BJ (cell line): ENCODE measurements at regions of chr4 and their contacts with region 1.

Region 1: GRCh38 chr4:78355306-78355705 is 196.3 kb upstream of the ANXA3 start:
- DNase-seq: no peak
- H3K4me3 ChIP-seq: no peak overlapping the region
- H3K27me3 ChIP-seq: no peaks in the 10 kb centered on the region
- CTCF ChIP-seq: no peak

Region 2: DNA sequence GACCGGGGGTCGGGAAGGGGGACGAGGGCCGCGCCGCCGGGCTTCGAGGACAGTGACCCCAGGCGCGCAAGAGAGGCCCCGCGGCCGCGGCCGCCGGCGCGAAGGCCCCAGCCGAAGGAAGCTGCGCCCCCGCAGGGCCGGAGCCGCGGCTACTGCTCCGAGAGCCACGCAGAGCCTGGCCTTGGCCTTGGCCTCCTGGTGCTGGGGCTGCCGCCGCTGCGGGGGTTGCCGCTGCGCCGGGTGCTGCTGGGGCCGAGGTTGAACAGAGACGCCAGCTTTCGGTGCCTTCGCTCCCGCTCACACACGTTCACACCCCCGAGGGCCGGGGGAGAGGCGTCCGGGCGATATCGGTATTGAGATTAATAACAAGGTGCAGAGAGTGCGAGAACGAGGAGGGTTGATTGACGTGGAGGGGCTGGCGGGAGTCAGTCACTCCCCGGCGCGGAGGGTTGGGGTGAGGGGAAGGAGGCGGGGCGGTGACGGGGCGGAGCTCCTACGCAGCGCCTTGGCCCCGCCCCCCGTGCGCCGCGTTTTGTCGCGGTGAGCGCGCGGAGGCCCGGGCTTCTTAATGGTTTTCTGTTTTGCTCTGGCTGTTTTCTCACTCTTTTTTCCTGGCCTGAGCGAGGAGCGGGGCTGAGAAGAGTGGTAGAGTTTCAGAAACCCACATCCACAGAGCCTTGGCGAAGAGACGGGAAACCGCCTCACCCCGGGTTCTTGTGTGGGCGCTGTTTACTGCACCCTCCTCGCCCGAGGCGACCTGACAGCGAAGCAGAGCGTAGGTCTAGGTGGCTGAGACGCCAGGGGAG is 535.3 kb before region 1 on chr4:
- CTCF ChIA-PET with region 1: no interaction called
- POLR2A ChIA-PET with region 1: no interaction called
- DNase-seq: no peak
- H3K4me3 ChIP-seq: peak overlapping the region; percentile 95
- H3K27me3 ChIP-seq: no peaks in the 10 kb centered on the region
- CTCF ChIP-seq: no peak

Region 3: GRCh38 chr4:78342125-78342524 is 13.2 kb before region 1 on chr4:
- CTCF ChIA-PET with region 1: interaction called, 10 read pairs
- POLR2A ChIA-PET with region 1: no interaction called
- DNase-seq: no peak
- H3K4me3 ChIP-seq: no peak overlapping the region
- H3K27me3 ChIP-seq: no peaks in the 10 kb centered on the region
- CTCF ChIP-seq: no peak

Region 4: DNA sequence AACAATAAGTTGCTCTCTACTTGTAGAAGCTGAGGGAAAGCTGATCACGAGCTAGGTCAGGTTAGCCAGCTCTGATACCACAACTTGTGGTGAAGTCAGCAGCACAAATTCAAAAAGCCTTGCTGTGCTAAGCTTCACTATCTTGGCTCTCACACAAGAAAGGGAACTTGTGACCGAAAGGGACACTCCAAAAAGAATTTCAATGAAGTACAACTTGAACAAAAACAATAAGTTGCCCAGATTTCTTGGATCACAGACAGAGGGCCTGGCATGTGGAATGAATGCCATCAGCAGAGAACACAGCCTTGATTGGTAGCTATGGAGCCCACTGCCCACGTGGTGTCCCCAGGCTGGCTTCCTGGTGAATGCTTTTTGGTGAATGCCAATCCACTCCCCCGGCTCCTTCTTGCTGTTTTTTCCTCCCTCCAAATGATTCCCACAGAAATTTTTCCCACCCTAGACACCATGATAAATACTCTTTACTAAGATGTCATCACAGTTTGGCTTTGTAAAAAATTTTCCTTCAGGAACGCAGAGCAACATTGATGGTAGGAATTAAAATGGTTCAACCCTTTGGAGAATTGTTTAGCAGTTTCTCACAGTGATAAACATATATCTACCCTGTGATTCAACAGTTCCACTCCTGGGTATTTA is 278.8 kb after region 1 on chr4:
- CTCF ChIA-PET with region 1: no interaction called
- POLR2A ChIA-PET with region 1: no interaction called
- DNase-seq: no peak
- H3K4me3 ChIP-seq: no peak overlapping the region
- H3K27me3 ChIP-seq: no peaks in the 10 kb centered on the region
- CTCF ChIP-seq: no peak